ENCODE measurements at regions of chr14 and their contacts with region 1.

Region 1: GRCh38 chr14:23984891-23985602 is 3.7 kb upstream of the DHRS4L2 start:
- DNase-seq: no peak
- H3K4me3 Mint-ChIP-seq: no peak overlapping the region
- H3K27ac Mint-ChIP-seq: no peak overlapping the region
- H3K4me1 Mint-ChIP-seq: peaks cover 14% of the 10 kb centered on the region
- H3K27me3 Mint-ChIP-seq: no peaks in the 10 kb centered on the region

Region 2: GRCh38 chr14:24036169-24036962 is 51.3 kb after region 1 on chr14:
- intact Hi-C with region 1: loop called (anchors 5 kb)
- DNase-seq: peak; percentile 65
- H3K4me3 Mint-ChIP-seq: peak overlapping the region; percentile 94
- H3K27ac Mint-ChIP-seq: peak overlapping the region; percentile 88
- H3K4me1 Mint-ChIP-seq: peaks cover 10% of the 10 kb centered on the region
- H3K27me3 Mint-ChIP-seq: no peaks in the 10 kb centered on the region

Region 3: GRCh38 chr14:24051789-24052655 is 67.0 kb after region 1 on chr14 and contains the start of gene CARMIL3:
- intact Hi-C with region 1: loop called (anchors 2 kb)
- DNase-seq: peak; percentile 58
- H3K4me3 Mint-ChIP-seq: peak within 1 kb of the TSS; percentile 79
- H3K27ac Mint-ChIP-seq: peak within 1 kb of the TSS; percentile 61
- H3K4me1 Mint-ChIP-seq: peaks cover 17% of the 10 kb centered on the region
- H3K27me3 Mint-ChIP-seq: peaks cover 24% of the 10 kb centered on the region
- total RNA-seq, gene CARMIL3: 1.3 and 1.7 TPM in 2 replicates

Region 4: GRCh38 chr14:24171422-24172260 is 186.6 kb after region 1 on chr14 and contains the start of gene REC8:
- intact Hi-C with region 1: no loop called
- DNase-seq: peak; percentile 41
- H3K4me3 Mint-ChIP-seq: peak within 1 kb of the TSS; percentile 69
- H3K27ac Mint-ChIP-seq: peak within 1 kb of the TSS; percentile 58
- H3K4me1 Mint-ChIP-seq: peaks cover 27% of the 10 kb centered on the region
- H3K27me3 Mint-ChIP-seq: no peaks in the 10 kb centered on the region
- total RNA-seq, gene REC8: 20.0 and 28.2 TPM in 2 replicates